Caco-2 (cell line): ENCODE measurements at regions of chr18 and their contacts with region 1.

Region 1: DNA sequence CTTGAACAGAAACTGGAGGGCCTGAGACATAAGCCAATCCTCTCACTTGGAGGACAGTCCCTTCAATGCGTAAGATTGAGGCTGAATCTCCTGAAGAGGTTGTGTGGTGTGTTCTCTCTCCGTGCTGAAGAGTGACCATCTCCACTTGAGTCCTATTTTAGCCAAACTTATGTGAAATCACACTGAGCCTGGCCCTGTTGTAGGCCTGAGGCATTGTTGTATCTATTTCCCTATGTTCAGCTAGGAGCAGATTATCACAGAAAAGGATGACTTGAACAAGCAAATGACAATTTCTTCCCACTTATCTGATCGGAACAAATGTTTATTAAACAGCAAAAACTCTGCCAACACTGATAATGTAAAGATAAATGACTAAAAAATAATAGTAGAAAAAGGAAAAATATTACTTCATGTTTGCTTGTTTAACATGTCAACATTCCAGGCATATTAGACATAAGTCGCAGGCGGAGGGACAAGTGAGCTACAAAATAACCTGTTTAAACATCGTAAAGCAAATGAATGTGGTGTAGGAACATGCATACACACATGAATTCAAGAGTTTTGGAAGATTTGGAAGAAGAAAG is 258.0 kb downstream of the TMX3 start:
- DNase-seq: peak; percentile 18 to 23
- H3K4me3 ChIP-seq: no peak overlapping the region
- H3K4me3 Mint-ChIP-seq: no peak overlapping the region
- H3K27ac Mint-ChIP-seq: no peak overlapping the region
- H3K4me1 ChIP-seq: no peaks in the 10 kb centered on the region; the same call in 1 of the 2 replicates
- H3K4me1 Mint-ChIP-seq: no peaks in the 10 kb centered on the region
- H3K27me3 ChIP-seq: no peaks in the 10 kb centered on the region
- H3K27me3 Mint-ChIP-seq: no peaks in the 10 kb centered on the region
- CTCF ChIP-seq: no peak

Region 2: DNA sequence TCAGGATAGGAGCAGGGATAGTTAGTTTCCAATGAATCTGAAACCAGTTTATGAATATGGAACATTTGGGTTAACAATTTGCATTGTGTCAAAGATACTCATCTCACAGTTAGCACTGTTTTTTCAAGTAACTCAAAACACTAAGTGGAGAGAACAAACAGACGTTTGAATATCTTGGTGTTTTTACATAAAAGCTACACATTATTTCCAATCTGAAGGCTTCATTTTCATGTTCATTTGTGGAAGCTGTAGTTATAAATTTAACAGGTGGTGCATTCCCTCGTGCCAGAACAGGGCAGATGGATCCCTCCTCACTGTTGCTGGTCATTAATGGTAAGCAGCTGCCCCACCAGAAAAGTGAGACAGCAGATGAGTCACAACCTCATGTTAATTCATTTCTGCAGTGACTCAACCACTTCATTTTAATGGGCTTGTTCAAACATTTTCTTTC is 28.9 kb before region 1 on chr18:
- CTCF ChIA-PET with region 1: no interaction called
- POLR2A ChIA-PET with region 1: no interaction called
- intact Hi-C with region 1: no loop called
- DNase-seq: no peak
- H3K4me3 ChIP-seq: no peak overlapping the region
- H3K4me3 Mint-ChIP-seq: no peak overlapping the region
- H3K27ac Mint-ChIP-seq: no peak overlapping the region
- H3K4me1 ChIP-seq: no peaks in the 10 kb centered on the region
- H3K4me1 Mint-ChIP-seq: no peaks in the 10 kb centered on the region
- H3K27me3 ChIP-seq: no peaks in the 10 kb centered on the region
- H3K27me3 Mint-ChIP-seq: no peaks in the 10 kb centered on the region
- CTCF ChIP-seq: no peak

Region 3: GRCh38 chr18:68438983-68439382 is 17.9 kb before region 1 on chr18:
- CTCF ChIA-PET with region 1: no interaction called
- POLR2A ChIA-PET with region 1: no interaction called
- intact Hi-C with region 1: loop called (anchors 2 kb)
- DNase-seq: no peak
- H3K4me3 ChIP-seq: no peak overlapping the region
- H3K4me3 Mint-ChIP-seq: no peak overlapping the region
- H3K27ac Mint-ChIP-seq: peak overlapping the region; percentile 71
- H3K4me1 ChIP-seq: peaks cover 10% of the 10 kb centered on the region
- H3K4me1 Mint-ChIP-seq: peaks cover 7% of the 10 kb centered on the region
- H3K27me3 ChIP-seq: no peaks in the 10 kb centered on the region
- H3K27me3 Mint-ChIP-seq: no peaks in the 10 kb centered on the region
- CTCF ChIP-seq: no peak

Region 4: DNA sequence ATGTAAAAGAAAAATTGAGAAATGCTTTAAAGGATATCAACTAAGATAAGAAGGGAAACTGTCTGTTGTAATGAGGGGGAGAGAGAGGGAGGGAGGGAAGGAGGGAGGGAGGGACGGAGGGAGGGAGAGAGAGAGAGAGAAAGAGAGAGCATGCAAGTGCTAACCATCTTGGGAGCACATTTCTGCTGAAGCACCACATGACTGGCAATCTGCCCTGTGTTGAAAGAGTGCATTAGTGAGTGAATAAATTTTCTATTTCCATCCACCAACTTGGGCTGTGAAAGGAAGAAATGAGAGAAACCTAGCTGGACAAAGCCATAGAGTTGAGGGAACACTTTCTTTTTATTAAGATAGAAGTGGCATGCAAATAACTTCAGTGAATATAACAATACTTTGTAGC is 147.4 kb after region 1 on chr18:
- CTCF ChIA-PET with region 1: no interaction called
- POLR2A ChIA-PET with region 1: no interaction called
- intact Hi-C with region 1: no loop called
- DNase-seq: no peak
- H3K4me3 ChIP-seq: no peak overlapping the region
- H3K4me3 Mint-ChIP-seq: no peak overlapping the region
- H3K27ac Mint-ChIP-seq: no peak overlapping the region
- H3K4me1 ChIP-seq: no peaks in the 10 kb centered on the region
- H3K4me1 Mint-ChIP-seq: no peaks in the 10 kb centered on the region
- H3K27me3 ChIP-seq: no peaks in the 10 kb centered on the region
- H3K27me3 Mint-ChIP-seq: peaks cover 3% of the 10 kb centered on the region
- CTCF ChIP-seq: no peak